Left ventricle myocardium inferior (tissue), 1 donor: ENCODE measurements at regions of chr16 and their contacts with region 1.

Region 1: GRCh38 chr16:77584205-77584859 is 138.0 kb upstream of the NUDT7 start:
- DNase-seq: no peak
- H3K4me3 ChIP-seq: no peak overlapping the region
- H3K27ac ChIP-seq: no peak overlapping the region
- H3K4me1 ChIP-seq: peaks cover 6% of the 10 kb centered on the region
- H3K27me3 ChIP-seq: peaks cover 48% of the 10 kb centered on the region
- CTCF ChIP-seq: peak; percentile 92

Region 2: GRCh38 chr16:77236063-77236511 is 348.2 kb before region 1 on chr16:
- intact Hi-C with region 1: loop called (anchors 1 kb)
- DNase-seq: peak; percentile 84
- H3K4me3 ChIP-seq: peak overlapping the region; percentile 41
- H3K27ac ChIP-seq: no peak overlapping the region
- H3K4me1 ChIP-seq: peaks cover 3% of the 10 kb centered on the region
- H3K27me3 ChIP-seq: peaks cover 21% of the 10 kb centered on the region
- CTCF ChIP-seq: peak; percentile 99

Region 3: DNA sequence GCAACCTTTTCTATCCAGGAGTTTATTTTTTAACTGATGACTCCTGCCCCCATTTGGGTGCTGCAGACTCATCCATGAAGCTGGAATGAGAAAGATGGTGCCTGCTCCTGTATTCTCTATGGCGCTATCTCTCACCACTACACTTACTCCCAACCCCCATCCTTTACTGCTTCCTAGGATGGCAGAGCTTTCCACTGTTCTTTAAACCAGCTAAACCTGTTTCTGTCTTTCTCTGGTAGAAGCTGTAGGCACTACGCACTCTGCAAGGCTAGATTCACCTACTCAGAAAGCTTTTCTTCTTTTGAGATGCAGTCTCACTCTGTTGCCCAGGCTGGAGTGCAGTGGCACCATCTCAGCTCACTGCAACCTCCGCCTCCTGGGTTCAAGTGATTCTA is 196.5 kb before region 1 on chr16:
- intact Hi-C with region 1: no loop called
- DNase-seq: no peak
- H3K4me3 ChIP-seq: no peak overlapping the region
- H3K27ac ChIP-seq: no peak overlapping the region
- H3K4me1 ChIP-seq: no peaks in the 10 kb centered on the region
- H3K27me3 ChIP-seq: peaks cover 17% of the 10 kb centered on the region
- CTCF ChIP-seq: no peak